Transverse colon (tissue), 4 donors: ENCODE measurements at regions of chr4 and their contacts with region 1.

Region 1: GRCh38 chr4:71537551-71538065 is 198.8 kb downstream of the SLC4A4 start:
- DNase-seq: no peak
- H3K4me3 ChIP-seq: no peak overlapping the region
- H3K27ac ChIP-seq: no peak overlapping the region
- H3K4me1 ChIP-seq: no peaks in the 10 kb centered on the region
- H3K27me3 ChIP-seq: no peaks in the 10 kb centered on the region
- CTCF ChIP-seq: no peak
- EP300 ChIP-seq: no peak
- POLR2A ChIP-seq: no peak

Region 2: DNA sequence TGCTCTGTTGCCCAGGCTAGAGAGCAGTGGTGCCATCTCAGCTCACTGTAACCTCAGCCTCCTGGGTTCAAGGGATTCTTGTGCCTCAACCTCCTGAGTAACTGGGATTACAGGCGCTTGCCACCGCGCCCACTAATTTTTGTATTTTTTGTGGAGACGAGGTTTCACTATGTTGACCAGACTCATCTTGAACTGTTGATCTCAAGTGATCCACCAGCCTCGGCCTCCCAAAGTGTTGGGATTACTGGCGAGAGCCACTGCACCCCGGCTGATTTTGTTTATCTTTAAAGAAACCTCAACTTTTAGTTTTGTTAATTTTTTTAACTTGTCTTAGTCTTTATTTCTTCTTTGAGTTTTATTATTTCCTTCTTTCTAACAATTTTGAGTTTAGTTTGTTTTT is 35.6 kb before region 1 on chr4:
- in situ Hi-C with region 1: no loop called
- intact Hi-C with region 1: loop called (anchors 1 kb)
- DNase-seq: no peak
- H3K4me3 ChIP-seq: no peak overlapping the region
- H3K27ac ChIP-seq: no peak overlapping the region
- H3K4me1 ChIP-seq: no peaks in the 10 kb centered on the region
- H3K27me3 ChIP-seq: no peaks in the 10 kb centered on the region
- CTCF ChIP-seq: no peak
- EP300 ChIP-seq: no peak
- POLR2A ChIP-seq: no peak

Region 3: GRCh38 chr4:72179342-72179741 is 641.7 kb after region 1 on chr4:
- in situ Hi-C with region 1: no loop called
- intact Hi-C with region 1: no loop called
- DNase-seq: no peak
- H3K4me3 ChIP-seq: no peak overlapping the region
- H3K27ac ChIP-seq: no peak overlapping the region
- H3K4me1 ChIP-seq: no peaks in the 10 kb centered on the region
- H3K27me3 ChIP-seq: no peaks in the 10 kb centered on the region
- CTCF ChIP-seq: no peak
- EP300 ChIP-seq: no peak
- POLR2A ChIP-seq: no peak